ENCODE measurements at regions of chr10 and their contacts with region 1.

Region 1: DNA sequence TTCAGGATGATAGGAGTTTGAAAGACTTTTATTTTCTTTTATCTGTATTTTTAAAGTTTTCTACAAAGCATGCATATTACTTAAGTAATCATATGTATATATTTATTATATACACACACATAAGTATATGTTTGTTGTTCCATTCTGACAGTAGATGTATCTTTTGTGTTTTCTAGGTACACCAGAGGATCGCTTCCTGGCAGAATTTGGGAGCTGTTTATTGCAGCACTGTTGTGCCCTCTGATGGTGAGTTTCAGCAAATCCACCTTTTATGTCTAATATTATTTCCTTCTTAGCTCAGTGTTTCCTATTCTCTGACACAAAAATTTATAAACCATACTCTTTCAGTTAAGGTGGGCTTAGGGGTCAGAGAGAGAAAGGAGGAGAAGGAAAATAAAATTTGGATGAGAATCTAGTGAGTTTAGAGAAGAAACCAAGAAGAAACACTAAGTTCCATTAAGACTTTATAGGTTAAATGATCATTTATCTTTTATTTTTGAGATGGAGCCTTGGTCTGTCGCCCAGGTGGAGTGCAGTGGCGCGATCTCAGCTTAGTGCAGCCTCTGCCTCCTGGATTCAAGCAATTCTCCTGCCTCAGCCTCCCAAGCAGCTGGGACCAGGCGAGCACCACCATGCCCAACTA is 59.2 kb upstream of the OIT3 start:
- DNase-seq: no peak
- H3K4me3 ChIP-seq: no peak overlapping the region
- H3K27ac ChIP-seq: no peak overlapping the region
- H3K4me1 ChIP-seq: peaks cover 0 to 28% (median 0%) of the 10 kb centered on the region in 3 donors
- H3K27me3 ChIP-seq: no peaks in the 10 kb centered on the region
- CTCF ChIP-seq: peak; percentile 13 to 76 (median 70)
- POLR2A ChIP-seq: no peak

Region 2: GRCh38 chr10:72364239-72364777 is 470.0 kb before region 1 on chr10:
- intact Hi-C with region 1: loop called (anchors 5 kb)
- DNase-seq: peak; percentile 61
- H3K4me3 ChIP-seq: peak overlapping the region in 1 of 4 donors; percentile 37
- H3K27ac ChIP-seq: peak overlapping the region; percentile 10 to 77 (median 49)
- H3K4me1 ChIP-seq: peaks cover 7 to 14% (median 9%) of the 10 kb centered on the region in 3 donors
- H3K27me3 ChIP-seq: no peaks in the 10 kb centered on the region
- CTCF ChIP-seq: peak; percentile 86 to 97 (median 94)
- POLR2A ChIP-seq: peak in 1 of 4 donors; percentile 26

Region 3: DNA sequence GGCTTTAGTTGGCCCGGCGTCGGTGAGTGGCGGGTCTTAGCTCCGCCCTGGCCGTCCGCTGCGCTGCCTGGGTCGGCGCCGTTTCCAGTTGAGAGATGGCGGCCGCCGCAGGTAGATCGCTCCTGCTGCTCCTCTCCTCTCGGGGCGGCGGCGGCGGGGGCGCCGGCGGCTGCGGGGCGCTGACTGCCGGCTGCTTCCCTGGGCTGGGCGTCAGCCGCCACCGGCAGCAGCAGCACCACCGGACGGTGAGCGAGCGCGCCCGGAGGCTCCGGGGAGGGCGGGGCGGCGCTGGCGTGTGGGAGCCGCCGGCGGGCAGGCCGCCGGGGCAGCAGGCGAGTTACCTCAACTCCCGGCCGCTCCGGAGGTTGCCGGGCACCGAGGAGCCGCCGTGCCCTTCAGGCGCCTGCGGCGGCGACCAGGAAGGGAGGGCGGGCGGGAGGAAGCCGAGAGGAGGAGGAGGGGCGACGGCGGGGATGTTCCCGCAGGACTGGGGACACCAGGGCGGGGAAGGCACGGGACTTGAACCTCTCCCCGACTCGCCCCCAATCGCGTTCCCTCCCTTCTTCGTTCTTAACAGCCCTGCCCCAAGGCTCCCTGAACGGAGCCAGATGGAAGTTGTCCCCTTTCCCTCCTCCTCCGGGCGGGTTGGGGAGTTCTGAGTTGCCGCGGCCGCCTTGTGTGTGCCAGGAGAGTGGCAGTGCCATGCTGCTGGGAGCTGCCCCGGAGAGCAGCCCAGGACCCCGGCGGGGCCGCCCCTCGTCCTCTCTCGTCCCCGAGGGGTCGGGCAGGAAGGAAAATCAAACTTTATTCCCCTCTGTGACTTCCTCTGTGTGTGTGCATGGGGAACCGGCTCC is 142.0 kb before region 1 on chr10 and contains the start of gene MCU:
- intact Hi-C with region 1: loop called (anchors 5 kb)
- DNase-seq: peak; percentile 67
- H3K4me3 ChIP-seq: peak within 1 kb of the TSS; percentile 67 to 94 (median 75)
- H3K27ac ChIP-seq: peak within 1 kb of the TSS; percentile 91 to 96 (median 95)
- H3K4me1 ChIP-seq: peaks cover 8 to 49% (median 26%) of the 10 kb centered on the region in 3 donors
- H3K27me3 ChIP-seq: no peaks in the 10 kb centered on the region
- CTCF ChIP-seq: peak in 1 of 6 experiments; percentile 13
- POLR2A ChIP-seq: peak in 3 of 4 donors; percentile 55 to 91 (median 90)
- total RNA-seq, gene MCU: 19.9 to 30.0 (median 23.4) TPM

Region 4: GRCh38 chr10:72913287-72913686 is 79.0 kb after region 1 on chr10:
- intact Hi-C with region 1: no loop called
- DNase-seq: no peak
- H3K4me3 ChIP-seq: no peak overlapping the region
- H3K27ac ChIP-seq: no peak overlapping the region
- H3K4me1 ChIP-seq: no peaks in the 10 kb centered on the region
- H3K27me3 ChIP-seq: no peaks in the 10 kb centered on the region
- CTCF ChIP-seq: no peak
- POLR2A ChIP-seq: no peak

Region 5: GRCh38 chr10:72976886-72977285 is 142.6 kb after region 1 on chr10:
- intact Hi-C with region 1: no loop called
- DNase-seq: no peak
- H3K4me3 ChIP-seq: no peak overlapping the region
- H3K27ac ChIP-seq: no peak overlapping the region
- H3K4me1 ChIP-seq: no peaks in the 10 kb centered on the region
- H3K27me3 ChIP-seq: peaks cover 0 to 6% (median 0%) of the 10 kb centered on the region in 4 donors
- CTCF ChIP-seq: no peak
- POLR2A ChIP-seq: no peak